B cell (primary cell): ENCODE measurements at regions of chr2 and their contacts with region 1.

Region 1: GRCh38 chr2:62787386-62787785 is 81.9 kb downstream of the EHBP1 start:
- DNase-seq: peak; percentile 4
- ATAC-seq: no peak
- H3K4me3 ChIP-seq: no peak overlapping the region
- H3K4me3 Mint-ChIP-seq: no peak overlapping the region
- H3K27ac ChIP-seq: no peak overlapping the region
- H3K27ac Mint-ChIP-seq: no peak overlapping the region
- H3K4me1 ChIP-seq: no peaks in the 10 kb centered on the region
- H3K4me1 Mint-ChIP-seq: no peaks in the 10 kb centered on the region
- H3K27me3 ChIP-seq: no peaks in the 10 kb centered on the region
- H3K27me3 Mint-ChIP-seq: no peaks in the 10 kb centered on the region
- CTCF ChIP-seq: no peak

Region 2: GRCh38 chr2:62675062-62675461 is 112.3 kb before region 1 on chr2:
- CTCF ChIA-PET with region 1: no interaction called
- POLR2A ChIA-PET with region 1: no interaction called
- intact Hi-C with region 1: no loop called
- DNase-seq: no peak
- ATAC-seq: no peak
- H3K4me3 ChIP-seq: no peak overlapping the region
- H3K4me3 Mint-ChIP-seq: no peak overlapping the region
- H3K27ac ChIP-seq: no peak overlapping the region
- H3K27ac Mint-ChIP-seq: no peak overlapping the region
- H3K4me1 ChIP-seq: no peaks in the 10 kb centered on the region
- H3K4me1 Mint-ChIP-seq: no peaks in the 10 kb centered on the region
- H3K27me3 ChIP-seq: no peaks in the 10 kb centered on the region
- H3K27me3 Mint-ChIP-seq: peaks cover 3% of the 10 kb centered on the region
- CTCF ChIP-seq: no peak

Region 3: DNA sequence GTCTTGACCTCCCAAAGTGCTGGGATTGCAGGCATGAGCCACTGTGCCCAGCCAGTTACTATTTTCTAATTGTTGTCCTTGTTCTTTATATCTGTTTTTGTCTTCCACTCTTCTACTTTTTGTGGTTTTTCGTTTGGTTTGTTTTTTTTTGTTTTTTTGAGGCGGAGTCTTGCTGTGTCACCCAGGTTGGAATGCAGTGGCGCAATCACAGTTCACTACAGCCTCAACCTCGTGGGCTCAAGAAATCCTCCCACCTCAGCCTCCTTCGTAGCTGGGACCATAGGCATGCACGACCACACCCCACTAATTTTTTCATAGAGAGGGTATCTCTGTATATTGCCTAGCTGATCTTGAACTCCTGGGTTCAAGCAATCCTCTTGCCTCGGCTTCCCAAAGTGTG is 18.8 kb after region 1 on chr2:
- CTCF ChIA-PET with region 1: no interaction called
- POLR2A ChIA-PET with region 1: no interaction called
- intact Hi-C with region 1: no loop called
- DNase-seq: no peak
- ATAC-seq: no peak
- H3K4me3 ChIP-seq: no peak overlapping the region
- H3K4me3 Mint-ChIP-seq: no peak overlapping the region
- H3K27ac ChIP-seq: no peak overlapping the region
- H3K27ac Mint-ChIP-seq: no peak overlapping the region
- H3K4me1 ChIP-seq: no peaks in the 10 kb centered on the region
- H3K4me1 Mint-ChIP-seq: peaks cover 5% of the 10 kb centered on the region
- H3K27me3 ChIP-seq: no peaks in the 10 kb centered on the region
- H3K27me3 Mint-ChIP-seq: no peaks in the 10 kb centered on the region
- CTCF ChIP-seq: no peak

Region 4: DNA sequence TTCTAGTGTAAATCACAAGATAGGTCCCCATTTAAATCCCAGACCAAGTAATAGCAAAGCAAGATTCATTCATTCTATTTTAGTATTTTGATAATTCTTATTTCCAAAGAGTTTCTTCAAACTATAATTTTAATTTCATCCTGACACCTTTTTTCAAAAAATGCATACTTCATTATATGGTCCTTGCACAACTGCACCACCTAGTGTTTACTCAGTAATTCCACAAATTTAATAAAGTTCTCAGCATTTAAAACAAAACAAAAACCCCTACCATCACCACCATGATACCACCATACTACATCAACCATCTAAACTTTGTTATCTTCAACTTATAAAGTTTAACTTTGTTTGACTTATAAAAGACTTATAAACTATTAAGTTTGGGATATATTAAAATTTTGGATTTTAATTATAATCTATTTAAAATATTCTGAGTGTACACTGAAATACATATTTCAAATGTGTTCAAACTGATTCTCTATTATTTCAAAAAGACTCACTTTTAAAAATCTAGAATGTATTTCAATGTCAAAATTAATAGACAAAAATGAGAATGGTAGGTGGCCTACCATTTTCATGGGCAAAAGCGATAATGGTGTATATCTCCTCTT is 756.7 kb after region 1 on chr2:
- CTCF ChIA-PET with region 1: no interaction called
- POLR2A ChIA-PET with region 1: no interaction called
- intact Hi-C with region 1: loop called (anchors 5 kb)
- DNase-seq: no peak
- ATAC-seq: no peak
- H3K4me3 ChIP-seq: no peak overlapping the region
- H3K4me3 Mint-ChIP-seq: no peak overlapping the region
- H3K27ac ChIP-seq: no peak overlapping the region
- H3K27ac Mint-ChIP-seq: no peak overlapping the region
- H3K4me1 ChIP-seq: no peaks in the 10 kb centered on the region
- H3K4me1 Mint-ChIP-seq: peaks cover 10% of the 10 kb centered on the region
- H3K27me3 ChIP-seq: no peaks in the 10 kb centered on the region
- H3K27me3 Mint-ChIP-seq: no peaks in the 10 kb centered on the region
- CTCF ChIP-seq: peak; percentile 60